ENCODE measurements at regions of chr19 and their contacts with region 1.

Region 1: GRCh38 chr19:41959056-41960053 is at the start of gene RABAC1:
- DNase-seq: peak; percentile 96
- H3K4me3 ChIP-seq: peak within 1 kb of the TSS; percentile 94 to 97
- H3K27ac ChIP-seq: peak within 1 kb of the TSS; percentile 83 to 95
- H3K4me1 ChIP-seq: peaks cover 12% of the 10 kb centered on the region
- H3K27me3 ChIP-seq: no peaks in the 10 kb centered on the region
- CTCF ChIP-seq: no peak
- POLR2A ChIP-seq: peak; percentile 49
- total RNA-seq, gene RABAC1: 143 to 196 TPM

Region 2: DNA sequence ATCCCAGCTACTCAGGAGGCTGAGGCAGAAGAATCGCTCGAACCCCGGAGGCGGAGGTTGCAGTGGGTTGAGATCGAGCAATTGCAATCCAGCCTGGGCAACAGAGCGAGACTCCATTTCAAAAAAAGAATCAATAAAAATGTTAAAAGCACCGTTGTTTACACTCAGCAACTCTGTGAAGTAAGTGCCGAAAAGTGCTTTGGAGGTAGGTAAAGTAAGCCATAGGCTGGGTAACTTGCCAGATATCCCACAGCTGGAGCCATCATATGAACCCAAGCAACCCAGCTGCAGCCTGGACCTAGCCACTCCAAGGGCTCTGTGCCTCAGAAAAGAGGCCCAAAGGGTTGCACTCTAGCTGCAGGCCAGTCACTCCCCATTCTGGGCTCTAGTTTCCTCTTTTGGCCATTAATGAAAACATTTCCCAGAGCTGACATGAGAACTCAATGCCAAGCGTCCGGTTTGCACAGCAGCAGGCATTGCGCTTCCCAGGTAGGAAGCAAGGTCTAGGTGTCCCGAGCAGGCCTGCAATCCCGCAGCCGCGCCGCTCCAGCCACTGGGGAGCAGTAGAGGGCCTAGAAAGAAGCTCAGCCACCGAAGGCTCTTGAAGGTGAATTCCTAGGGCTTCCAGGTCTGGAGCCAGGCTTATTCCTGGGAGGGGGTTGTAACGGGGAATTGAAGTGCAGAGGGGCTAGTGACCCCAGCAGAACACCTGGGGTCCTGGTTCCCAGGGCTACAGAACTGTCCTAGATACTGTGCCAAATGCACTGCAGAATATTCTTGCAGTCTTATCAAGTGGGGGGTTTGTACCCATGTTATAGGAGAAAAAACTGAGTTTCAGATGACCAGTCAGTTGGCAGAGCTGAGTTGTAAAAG is 86.3 kb before region 1 on chr19:
- intact Hi-C with region 1: loop called (anchors 10 kb)
- DNase-seq: peak; percentile 64
- H3K4me3 ChIP-seq: no peak overlapping the region
- H3K27ac ChIP-seq: no peak overlapping the region
- H3K4me1 ChIP-seq: no peaks in the 10 kb centered on the region
- H3K27me3 ChIP-seq: no peaks in the 10 kb centered on the region
- CTCF ChIP-seq: peak in 1 of 3 experiments; percentile 36
- POLR2A ChIP-seq: no peak

Region 3: GRCh38 chr19:42199440-42200115 is 240.2 kb after region 1 on chr19:
- intact Hi-C with region 1: no loop called
- DNase-seq: no peak
- H3K4me3 ChIP-seq: no peak overlapping the region
- H3K27ac ChIP-seq: no peak overlapping the region
- H3K4me1 ChIP-seq: no peaks in the 10 kb centered on the region
- H3K27me3 ChIP-seq: no peaks in the 10 kb centered on the region
- CTCF ChIP-seq: no peak
- POLR2A ChIP-seq: no peak